AG04449 (cell line): ENCODE measurements at regions of chr11 and their contacts with region 1.

Region 1: GRCh38 chr11:125345421-125346178 is 150.5 kb downstream of the FEZ1 start:
- DNase-seq: no peak
- H3K4me3 ChIP-seq: no peak overlapping the region
- CTCF ChIP-seq: peak; percentile 80

Region 2: GRCh38 chr11:124961972-124962609 is 383.5 kb before region 1 on chr11:
- CTCF ChIA-PET with region 1: interaction called, 56 read pairs
- POLR2A ChIA-PET with region 1: no interaction called
- DNase-seq: peak; percentile 33
- H3K4me3 ChIP-seq: no peak overlapping the region
- CTCF ChIP-seq: peak; percentile 51

Region 3: DNA sequence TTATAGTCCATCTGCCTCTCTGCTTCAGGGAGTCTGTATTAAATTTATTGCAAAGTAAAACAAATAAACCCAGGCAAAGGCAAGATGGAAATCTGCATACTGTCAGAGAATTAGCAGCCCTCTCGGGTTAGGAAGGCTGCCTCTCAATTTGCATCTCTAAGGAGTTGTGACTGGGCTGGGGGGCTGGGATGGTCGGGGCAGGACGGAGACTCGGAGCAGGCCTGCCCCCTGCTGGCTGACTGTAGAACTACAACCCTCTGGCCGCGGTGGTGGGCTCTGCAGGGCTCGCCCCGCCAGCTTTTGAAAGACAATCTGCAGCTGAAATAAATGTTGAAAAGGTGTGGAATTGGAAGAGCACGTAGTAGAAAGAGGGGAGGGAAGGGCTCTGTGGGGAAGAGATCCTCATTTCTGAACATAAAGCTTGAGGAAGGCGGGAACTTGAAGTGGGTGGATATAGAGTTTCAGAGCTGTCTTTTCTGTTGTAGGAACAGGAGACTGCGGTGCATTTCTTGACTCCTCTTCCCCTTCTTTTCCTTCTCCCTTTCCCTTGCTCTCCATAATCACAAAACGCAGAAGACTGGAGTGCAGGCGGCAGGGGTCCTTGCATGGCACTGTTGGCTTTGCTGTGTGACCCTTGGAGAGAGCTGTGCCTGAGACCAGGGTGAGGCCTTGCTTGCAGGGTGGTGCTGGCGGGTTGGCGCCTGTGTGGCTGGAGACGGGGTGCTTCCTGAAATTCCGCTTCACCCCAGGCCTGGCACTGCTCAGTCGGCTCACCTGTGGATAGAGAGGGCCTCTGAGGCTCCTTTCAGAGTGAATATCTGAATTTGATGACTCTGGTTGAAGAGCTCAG is 203.7 kb before region 1 on chr11:
- CTCF ChIA-PET with region 1: interaction called, 31 read pairs
- POLR2A ChIA-PET with region 1: no interaction called
- DNase-seq: no peak
- H3K4me3 ChIP-seq: no peak overlapping the region
- CTCF ChIP-seq: peak; percentile 92

Region 4: DNA sequence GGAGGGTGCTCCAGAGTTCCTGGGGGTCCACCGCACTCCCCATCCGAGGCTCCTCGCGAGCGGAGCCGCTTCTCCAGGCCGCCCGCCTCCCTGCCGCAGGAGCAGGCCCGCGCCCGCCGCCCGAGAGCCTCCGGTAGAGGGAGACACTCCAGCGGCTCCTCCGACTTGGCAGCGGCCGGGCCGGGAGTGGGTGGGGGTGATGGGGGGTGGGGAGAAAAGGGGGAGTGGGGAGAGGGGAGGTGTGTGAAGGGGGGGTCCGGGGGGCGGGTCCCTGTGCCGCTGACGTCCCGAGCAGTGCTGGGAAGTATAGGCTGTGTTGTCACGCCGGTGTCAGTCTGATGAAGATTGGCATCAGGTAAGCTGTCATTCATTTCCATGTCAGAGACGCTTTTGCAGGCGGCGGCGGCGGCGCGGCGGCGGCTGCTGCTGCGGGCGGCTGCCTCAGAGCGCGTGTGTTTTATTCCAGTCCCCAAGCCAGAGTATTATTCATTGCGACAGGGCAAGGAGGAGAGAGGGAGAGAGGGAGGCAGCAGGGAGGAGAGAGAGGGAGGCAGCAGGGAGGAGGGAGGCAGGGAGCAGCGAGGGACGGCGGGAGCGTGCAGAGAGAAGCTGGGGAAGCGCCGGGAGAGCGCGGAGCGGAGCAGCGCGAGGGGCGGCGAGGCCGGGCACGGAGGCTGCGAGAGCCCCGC is 181.0 kb before region 1 on chr11 and contains the start of gene PKNOX2:
- CTCF ChIA-PET with region 1: interaction called, 94 read pairs
- POLR2A ChIA-PET with region 1: no interaction called
- DNase-seq: no peak
- H3K4me3 ChIP-seq: peak within 1 kb of the TSS; percentile 57
- CTCF ChIP-seq: peak; percentile 89

Region 5: GRCh38 chr11:125376117-125376516 is 30.5 kb after region 1 on chr11:
- CTCF ChIA-PET with region 1: interaction called, 351 read pairs
- POLR2A ChIA-PET with region 1: no interaction called
- DNase-seq: no peak
- H3K4me3 ChIP-seq: no peak overlapping the region
- CTCF ChIP-seq: no peak

Region 6: GRCh38 chr11:125410091-125410490 is 64.5 kb after region 1 on chr11:
- CTCF ChIA-PET with region 1: interaction called, 202 read pairs
- POLR2A ChIA-PET with region 1: no interaction called
- DNase-seq: no peak
- H3K4me3 ChIP-seq: no peak overlapping the region
- CTCF ChIP-seq: no peak